ENCODE measurements at regions of chr5 and their contacts with region 1.

Region 1: DNA sequence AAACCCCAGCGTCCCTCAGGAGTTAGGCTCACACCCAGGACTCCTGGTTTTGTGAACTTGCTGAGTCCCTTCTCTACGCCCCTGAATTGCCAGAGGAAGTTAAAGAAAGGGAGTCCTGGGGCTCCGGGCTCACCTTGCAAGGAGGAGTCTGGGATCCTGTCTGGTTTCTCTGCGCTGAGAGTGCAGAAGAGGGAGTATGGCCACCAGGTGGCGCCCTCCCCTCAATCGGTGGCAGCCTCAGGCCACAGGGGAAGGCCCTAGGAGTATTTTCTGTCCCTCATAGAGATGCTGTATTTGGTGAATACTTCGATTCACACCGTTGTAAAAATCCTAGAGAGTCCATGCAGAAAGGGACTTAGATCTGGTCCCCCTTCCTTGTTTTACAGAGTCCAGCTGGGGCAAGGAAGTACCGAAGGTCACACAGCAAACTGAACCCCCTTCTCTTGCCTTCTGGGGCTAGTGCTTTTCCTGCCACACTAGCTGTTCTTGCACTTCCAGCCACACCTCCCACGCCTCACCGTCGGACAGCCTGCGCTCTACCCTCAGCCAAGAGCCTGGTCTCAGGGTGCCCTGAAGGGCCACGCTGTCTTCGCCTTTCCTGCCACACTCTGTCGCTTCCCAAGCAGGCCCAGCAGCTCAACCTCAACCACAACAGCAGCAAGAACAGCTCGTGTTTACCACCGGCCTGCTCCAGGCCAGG is 10.2 kb downstream of the HAND1 start:
- DNase-seq: peak; percentile 88
- ATAC-seq: peak; percentile 91

Region 2: GRCh38 chr5:154603978-154604679 is 136.3 kb after region 1 on chr5:
- intact Hi-C with region 1: loop called (anchors 10 kb)
- DNase-seq: peak; percentile 60
- ATAC-seq: peak; percentile 82